H1 (cell line): ENCODE measurements at regions of chr1 and their contacts with region 1.

Region 1: DNA sequence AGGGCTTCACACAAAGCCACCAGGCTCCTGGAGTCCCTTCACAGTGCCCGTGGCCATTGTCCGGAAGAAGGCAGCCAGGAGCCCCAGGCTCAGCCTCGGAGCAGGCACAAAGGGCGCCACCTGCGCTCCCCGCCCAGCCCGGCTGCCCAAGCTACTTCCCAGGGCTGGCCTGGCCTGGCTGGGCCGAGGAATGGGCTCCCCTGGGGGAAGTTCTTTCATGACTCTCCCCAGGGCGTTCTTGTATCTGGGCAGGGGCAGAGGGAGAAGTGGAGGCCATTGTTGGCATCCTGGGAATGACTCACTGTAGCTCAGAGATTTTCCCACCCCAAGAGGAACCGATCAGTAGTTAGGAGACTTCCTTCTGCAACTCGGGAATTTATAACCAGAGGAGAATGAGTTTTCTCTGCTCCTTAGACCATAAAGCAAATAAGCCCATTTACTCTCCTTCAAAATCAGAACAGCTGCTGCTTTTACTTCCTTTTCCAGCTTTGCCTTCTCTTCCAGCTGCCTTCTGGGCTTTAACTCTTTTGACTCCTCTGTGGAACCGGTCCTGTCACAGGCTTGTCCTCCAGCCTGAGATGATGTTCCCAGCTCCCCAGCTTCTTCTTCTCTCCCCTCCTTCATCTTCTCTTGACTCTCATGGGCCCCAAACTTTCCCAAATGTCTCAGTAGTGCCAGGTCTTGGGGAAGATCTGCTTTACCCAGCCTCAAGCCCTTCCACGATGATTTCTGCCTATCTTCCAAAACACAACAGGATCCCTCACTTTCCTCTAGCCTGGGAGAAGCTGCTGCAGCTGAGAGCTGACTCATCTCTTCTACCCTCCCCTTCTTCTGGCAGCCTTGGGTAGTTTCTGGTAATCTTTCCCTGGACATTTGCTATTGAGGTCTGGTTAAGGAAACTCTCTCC is 118.7 kb upstream of the CD34 start:
- DNase-seq: no peak
- H3K4me3 ChIP-seq: no peak overlapping the region
- H3K27ac ChIP-seq: no peak overlapping the region
- H3K4me1 ChIP-seq: no peaks in the 10 kb centered on the region
- H3K27me3 ChIP-seq: no peaks in the 10 kb centered on the region
- CTCF ChIP-seq: no peak
- EP300 ChIP-seq: no peak
- POLR2A ChIP-seq: no peak
- RAD21 ChIP-seq: no peak

Region 2: GRCh38 chr1:208047476-208047934 is 17.9 kb after region 1 on chr1:
- CTCF ChIA-PET with region 1: interaction called, 78 read pairs
- POLR2A ChIA-PET with region 1: no interaction called
- DNase-seq: no peak
- H3K4me3 ChIP-seq: no peak overlapping the region
- H3K27ac ChIP-seq: no peak overlapping the region
- H3K4me1 ChIP-seq: peaks cover 0 to 5% (median 0%) of the 10 kb centered on the region in 4 experiments; a peak in 1 of 7 replicates
- H3K27me3 ChIP-seq: no peaks in the 10 kb centered on the region
- CTCF ChIP-seq: no peak
- EP300 ChIP-seq: no peak
- POLR2A ChIP-seq: no peak
- RAD21 ChIP-seq: no peak

Region 3: DNA sequence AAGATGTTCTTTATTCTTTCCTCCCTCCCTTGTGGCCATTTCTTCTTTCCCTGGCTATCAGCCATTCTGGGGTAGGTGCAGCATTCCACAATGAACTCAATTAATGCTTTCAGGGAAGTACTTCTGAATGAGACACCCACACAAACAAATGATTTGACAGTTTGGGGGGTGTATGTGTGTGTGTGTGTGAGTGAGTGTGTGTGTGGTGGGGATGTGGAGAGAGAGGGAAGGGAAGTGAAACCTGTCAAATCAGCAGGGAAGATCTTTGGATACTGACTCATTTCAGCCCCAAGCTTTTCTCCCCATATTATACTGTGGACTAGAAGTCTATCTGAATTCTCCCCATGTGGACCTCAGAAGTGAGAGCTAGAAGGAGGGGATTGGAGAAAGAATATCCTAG is 36.2 kb after region 1 on chr1:
- CTCF ChIA-PET with region 1: interaction called, 48 read pairs
- POLR2A ChIA-PET with region 1: no interaction called
- DNase-seq: no peak
- H3K4me3 ChIP-seq: no peak overlapping the region
- H3K27ac ChIP-seq: no peak overlapping the region
- H3K4me1 ChIP-seq: no peaks in the 10 kb centered on the region; a peak in 1 of 7 replicates
- H3K27me3 ChIP-seq: no peaks in the 10 kb centered on the region
- CTCF ChIP-seq: no peak
- EP300 ChIP-seq: no peak
- POLR2A ChIP-seq: no peak
- RAD21 ChIP-seq: no peak